AG04449 (cell line): ENCODE measurements at regions of chr21 and their contacts with region 1.

Region 1: GRCh38 chr21:32403201-32403777 is 9.2 kb upstream of the EVA1C start:
- DNase-seq: no peak
- H3K4me3 ChIP-seq: no peak overlapping the region; the same call in 1 of the 2 replicates
- CTCF ChIP-seq: peak; percentile 57

Region 2: GRCh38 chr21:32382108-32382644 is 21.1 kb before region 1 on chr21:
- CTCF ChIA-PET with region 1: interaction called, 15 read pairs
- POLR2A ChIA-PET with region 1: no interaction called
- DNase-seq: peak; percentile 41
- H3K4me3 ChIP-seq: no peak overlapping the region
- CTCF ChIP-seq: no peak

Region 3: DNA sequence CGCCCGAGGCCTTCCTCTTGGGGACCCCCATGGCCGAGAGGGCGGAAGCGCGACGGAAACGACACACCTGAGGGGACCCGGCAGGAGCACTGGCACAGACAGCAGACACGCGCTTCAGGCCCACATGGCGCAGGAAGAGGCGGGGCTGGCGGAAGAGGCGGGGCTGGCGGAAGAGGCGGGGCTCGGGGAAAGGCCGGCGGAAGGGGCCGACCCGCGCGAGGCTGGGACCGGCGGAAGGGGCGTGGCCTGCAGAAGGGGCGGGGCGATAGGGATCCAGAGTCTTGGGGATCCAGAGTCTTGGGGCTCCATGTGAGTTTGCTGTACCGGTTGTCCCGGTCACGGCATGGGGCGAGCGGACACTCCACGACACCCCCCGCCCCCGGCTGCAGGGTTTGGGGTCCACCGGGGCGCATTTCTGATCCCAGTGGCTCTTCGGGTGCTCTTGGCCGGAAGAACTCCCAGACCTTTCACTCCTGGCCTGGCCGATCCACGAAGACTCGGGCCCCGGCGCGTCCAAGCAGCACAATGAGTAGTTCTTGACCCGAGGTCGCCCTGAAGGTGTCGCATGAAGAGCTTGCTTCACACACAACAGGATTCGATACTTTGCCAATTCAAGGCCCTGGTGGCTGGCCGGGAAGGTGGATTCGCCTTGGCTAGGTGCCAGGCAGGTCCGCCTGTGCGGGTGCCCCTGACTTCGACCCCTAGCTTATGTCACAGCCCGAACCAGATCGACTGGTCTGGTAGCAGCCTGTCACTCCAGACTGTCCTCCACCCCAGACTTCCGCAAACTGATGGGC is 10.2 kb before region 1 on chr21 and contains the start of gene URB1:
- CTCF ChIA-PET with region 1: interaction called, 94 read pairs
- POLR2A ChIA-PET with region 1: no interaction called
- DNase-seq: no peak
- H3K4me3 ChIP-seq: peak within 1 kb of the TSS; percentile 93
- CTCF ChIP-seq: no peak

Region 4: GRCh38 chr21:32562426-32562825 is 159.1 kb after region 1 on chr21:
- CTCF ChIA-PET with region 1: interaction called, 218 read pairs
- POLR2A ChIA-PET with region 1: no interaction called
- DNase-seq: peak; percentile 50
- H3K4me3 ChIP-seq: no peak overlapping the region
- CTCF ChIP-seq: peak; percentile 48

Region 5: DNA sequence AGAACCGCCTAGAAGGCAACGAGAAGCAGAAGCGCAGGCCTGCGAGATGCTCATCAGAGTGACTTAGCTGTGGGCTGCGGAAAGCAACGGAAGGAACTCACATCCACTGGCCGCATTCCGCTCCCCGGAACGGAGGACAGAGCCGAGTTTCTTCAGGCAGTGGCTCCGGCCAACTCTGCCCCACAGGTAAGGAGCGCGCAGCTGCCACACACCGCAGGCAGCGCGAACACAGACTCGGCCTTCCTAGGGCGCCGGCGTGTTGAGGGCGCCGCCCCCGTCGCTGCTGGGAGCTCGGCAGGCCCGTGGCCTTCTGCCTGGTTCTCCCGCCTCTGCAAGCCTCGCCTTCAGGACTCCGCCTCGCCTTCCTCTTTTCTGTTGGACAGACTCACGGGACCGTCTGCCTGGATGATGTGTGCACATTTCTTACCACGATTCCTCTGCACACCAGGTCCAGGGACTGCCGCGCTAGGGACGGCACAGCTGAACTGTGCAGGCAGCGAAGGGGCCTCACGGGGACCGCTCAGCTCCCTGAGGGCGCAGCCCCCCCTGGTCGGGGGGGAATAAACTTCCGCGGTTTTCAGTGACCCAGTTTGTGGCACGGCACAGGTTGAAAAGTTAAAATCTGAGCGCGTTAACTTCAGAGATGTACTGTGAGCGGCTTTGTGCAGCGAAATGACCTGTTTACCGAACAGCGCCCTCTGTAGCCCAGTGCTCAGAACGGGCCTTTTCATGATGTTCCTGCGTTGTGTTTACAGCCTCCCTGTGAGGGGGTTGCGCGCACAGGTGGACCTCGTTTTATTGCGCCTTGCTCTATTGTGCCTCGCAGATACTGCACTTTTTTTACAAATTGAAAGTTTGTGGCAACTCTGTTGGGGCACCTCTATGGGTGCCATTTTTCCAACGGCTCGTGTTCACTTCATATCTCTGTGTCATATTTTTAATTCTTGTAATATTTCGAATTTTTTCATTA is 166.3 kb after region 1 on chr21:
- CTCF ChIA-PET with region 1: interaction called, 218 read pairs
- POLR2A ChIA-PET with region 1: no interaction called
- DNase-seq: no peak
- H3K4me3 ChIP-seq: peak overlapping the region; percentile 66
- CTCF ChIP-seq: peak; percentile 86